Stomach (tissue), 19 donors: ENCODE measurements at regions of chr18 and their contacts with region 1.

Region 1: GRCh38 chr18:49768051-49768391 is 45.3 kb downstream of the ACAA2 start:
- DNase-seq: peak; percentile 65 to 86
- H3K4me3 ChIP-seq: no peak overlapping the region
- H3K27ac ChIP-seq: no peak overlapping the region
- H3K4me1 ChIP-seq: peaks cover 0 to 5% (median 0%) of the 10 kb centered on the region in 4 donors
- H3K27me3 ChIP-seq: no peaks in the 10 kb centered on the region
- CTCF ChIP-seq: peak in 4 of 7 experiments; percentile 22 to 45 (median 32)
- EP300 ChIP-seq: no peak
- POLR2A ChIP-seq: no peak

Region 2: DNA sequence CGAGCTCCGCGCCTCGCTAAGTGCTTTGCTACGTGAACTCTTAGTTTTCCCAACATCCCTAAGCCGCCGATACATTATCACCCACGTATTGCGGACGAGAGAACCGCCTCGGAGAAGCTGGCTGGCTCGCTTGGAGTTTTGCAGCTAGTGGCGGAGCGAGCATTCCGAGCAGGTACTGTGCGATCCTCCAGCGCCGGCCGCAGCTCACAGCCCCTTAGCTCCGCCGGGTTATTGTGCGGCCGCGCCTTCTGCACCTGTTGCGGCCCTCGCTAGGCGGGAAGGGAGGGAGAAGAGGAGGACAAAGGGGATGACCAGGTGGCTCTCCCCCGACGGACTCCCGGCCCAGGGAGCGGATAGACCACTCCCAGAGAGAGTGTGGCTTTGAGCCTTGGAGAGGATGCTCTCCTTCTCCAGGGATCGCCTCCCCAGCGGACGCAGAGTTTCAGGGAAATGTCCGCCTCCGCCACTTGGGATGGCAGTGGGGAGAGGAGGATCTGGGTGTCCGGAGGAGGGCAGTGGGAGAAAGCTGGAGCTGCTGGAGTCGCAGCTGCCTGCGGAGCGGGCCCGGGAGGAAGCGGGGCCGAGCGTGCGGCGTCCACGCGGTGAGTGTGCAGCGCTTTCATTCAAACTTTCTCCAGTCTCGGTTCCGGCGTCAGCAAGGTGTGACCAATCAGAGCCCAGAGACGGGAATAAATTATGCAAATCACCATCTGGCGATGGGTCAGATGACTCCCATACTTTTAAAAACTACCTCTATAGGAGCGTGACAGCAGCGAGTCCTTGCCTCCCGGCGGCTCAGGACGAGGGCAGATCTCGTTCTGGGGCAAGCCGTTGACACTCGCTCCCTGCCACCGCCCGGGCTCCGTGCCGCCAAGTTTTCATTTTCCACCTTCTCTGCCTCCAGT is 206.5 kb before region 1 on chr18 and contains the start of gene LIPG:
- intact Hi-C with region 1: loop called (anchors 10 kb)
- DNase-seq: peak; percentile 61 to 90
- H3K4me3 ChIP-seq: peak within 1 kb of the TSS; percentile 44 to 52 (median 48)
- H3K27ac ChIP-seq: peak within 1 kb of the TSS in 2 of 5 donors; percentile 27 to 51
- H3K4me1 ChIP-seq: peaks cover 34 to 60% (median 44%) of the 10 kb centered on the region in 4 donors
- H3K27me3 ChIP-seq: peaks cover 0 to 50% (median 37%) of the 10 kb centered on the region in 3 donors
- CTCF ChIP-seq: no peak
- EP300 ChIP-seq: no peak
- POLR2A ChIP-seq: no peak
- total RNA-seq, gene LIPG: 2.9 to 6.2 (median 4.0) TPM

Region 3: DNA sequence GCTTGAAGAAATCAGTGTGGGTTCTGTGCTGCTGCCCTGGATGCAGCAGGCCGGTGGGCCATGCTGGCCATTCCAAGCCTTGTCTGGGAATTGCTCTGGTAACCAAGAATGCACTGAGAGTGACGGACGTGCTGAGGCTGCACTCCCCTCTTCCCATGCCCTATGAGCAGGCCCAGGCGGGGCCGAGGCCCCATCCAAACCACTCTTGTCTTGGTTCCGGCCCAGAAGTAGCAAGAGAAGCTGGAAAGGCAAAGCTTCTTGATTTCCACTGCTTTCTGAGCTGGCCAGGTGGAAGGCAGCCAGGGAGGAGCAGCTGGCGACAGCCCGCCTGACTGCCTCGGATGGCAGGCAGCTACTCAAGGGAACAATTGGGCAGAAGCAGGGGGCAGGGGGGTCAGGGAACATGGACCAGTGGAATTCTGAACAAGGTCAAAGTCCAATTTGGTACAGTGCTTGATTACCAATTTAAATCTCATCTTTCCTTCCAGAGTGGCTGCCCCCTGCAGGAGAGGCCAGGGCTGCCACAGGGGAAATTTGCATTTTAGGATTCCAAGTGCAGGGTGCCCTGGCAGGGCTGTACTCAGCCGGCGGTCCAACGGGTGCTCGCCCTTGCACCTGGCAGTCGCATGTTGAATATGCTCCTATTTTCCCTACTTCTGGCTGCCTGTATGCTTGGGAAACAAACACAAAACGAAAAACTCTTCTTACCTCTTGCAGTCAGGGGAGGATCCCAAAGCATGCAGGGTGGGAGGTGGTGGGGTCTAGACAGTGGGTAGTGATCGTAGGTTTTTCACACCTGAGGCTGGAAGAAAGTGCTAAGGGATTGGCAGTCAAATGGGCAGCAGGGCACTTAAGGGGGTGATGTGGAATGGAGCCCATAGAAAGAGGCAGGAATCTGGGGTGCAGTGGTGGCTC is 138.9 kb before region 1 on chr18:
- intact Hi-C with region 1: no loop called
- DNase-seq: peak in 1 of 2 donors; percentile 35
- H3K4me3 ChIP-seq: no peak overlapping the region
- H3K27ac ChIP-seq: no peak overlapping the region
- H3K4me1 ChIP-seq: peaks cover 7 to 11% (median 8%) of the 10 kb centered on the region in 4 donors
- H3K27me3 ChIP-seq: no peaks in the 10 kb centered on the region
- CTCF ChIP-seq: peak in 1 of 7 experiments; percentile 17
- EP300 ChIP-seq: no peak
- POLR2A ChIP-seq: no peak

Region 4: DNA sequence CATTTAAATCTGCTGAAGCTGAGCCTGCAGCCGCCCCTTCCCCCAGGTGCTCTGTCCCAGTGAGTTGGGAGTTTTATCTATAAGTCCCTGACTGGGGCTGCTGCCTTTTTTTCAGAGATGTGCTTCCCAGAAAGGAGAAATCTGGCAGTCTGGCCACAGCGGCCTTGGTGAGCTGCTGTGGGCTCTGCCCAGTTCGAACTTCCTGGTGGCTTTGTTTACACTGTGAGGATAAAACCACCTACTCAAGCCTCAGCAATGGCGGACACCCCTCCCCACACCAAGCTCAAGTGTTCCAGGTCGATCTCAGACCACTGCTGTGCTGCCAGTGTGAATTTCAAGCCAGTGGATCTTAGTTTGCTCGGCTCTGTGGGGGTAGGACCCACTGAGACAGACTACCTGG is 52.0 kb before region 1 on chr18:
- intact Hi-C with region 1: no loop called
- DNase-seq: no peak
- H3K4me3 ChIP-seq: no peak overlapping the region
- H3K27ac ChIP-seq: no peak overlapping the region
- H3K4me1 ChIP-seq: peaks cover 0 to 3% (median 0%) of the 10 kb centered on the region in 4 donors
- H3K27me3 ChIP-seq: peaks cover 0 to 7% (median 0%) of the 10 kb centered on the region in 3 donors
- CTCF ChIP-seq: no peak
- EP300 ChIP-seq: no peak
- POLR2A ChIP-seq: no peak